Right ventricle myocardium inferior (tissue), 1 donor: ENCODE measurements at regions of chr1 and their contacts with region 1.

Region 1: GRCh38 chr1:110106013-110106941 is 6.0 kb upstream of the UBL4B start:
- DNase-seq: peak; percentile 51
- ATAC-seq: peak; percentile 67

Region 2: DNA sequence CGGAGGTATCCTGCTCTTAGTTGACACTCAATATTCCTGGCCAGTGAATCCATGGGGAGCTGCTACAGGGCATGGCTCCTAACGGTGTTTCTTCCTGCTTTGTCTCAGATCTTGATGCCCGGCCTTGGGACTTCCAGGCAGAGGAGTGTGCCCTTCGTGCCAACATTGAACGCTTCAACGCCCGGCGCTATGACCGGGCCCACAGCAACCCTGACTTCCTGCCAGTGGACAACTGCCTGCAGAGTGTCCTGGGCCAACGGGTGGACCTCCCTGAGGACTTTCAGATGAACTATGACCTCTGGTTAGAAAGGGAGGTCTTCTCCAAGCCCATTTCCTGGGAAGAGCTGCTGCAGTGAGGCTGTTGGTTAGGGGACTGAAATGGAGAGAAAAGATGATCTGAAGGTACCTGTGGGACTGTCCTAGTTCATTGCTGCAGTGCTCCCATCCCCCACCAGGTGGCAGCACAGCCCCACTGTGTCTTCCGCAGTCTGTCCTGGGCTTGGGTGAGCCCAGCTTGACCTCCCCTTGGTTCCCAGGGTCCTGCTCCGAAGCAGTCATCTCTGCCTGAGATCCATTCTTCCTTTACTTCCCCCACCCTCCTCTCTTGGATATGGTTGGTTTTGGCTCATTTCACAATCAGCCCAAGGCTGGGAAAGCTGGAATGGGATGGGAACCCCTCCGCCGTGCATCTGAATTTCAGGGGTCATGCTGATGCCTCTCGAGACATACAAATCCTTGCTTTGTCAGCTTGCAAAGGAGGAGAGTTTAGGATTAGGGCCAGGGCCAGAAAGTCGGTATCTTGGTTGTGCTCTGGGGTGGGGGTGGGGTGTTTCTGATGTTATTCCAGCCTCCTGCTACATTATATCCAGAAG is 52.5 kb before region 1 on chr1:
- intact Hi-C with region 1: loop called (anchors 2 kb)
- DNase-seq: peak; percentile 83
- ATAC-seq: peak; percentile 71